Prostate gland (tissue), 2 donors: ENCODE measurements at regions of chr7 and their contacts with region 1.

Region 1: DNA sequence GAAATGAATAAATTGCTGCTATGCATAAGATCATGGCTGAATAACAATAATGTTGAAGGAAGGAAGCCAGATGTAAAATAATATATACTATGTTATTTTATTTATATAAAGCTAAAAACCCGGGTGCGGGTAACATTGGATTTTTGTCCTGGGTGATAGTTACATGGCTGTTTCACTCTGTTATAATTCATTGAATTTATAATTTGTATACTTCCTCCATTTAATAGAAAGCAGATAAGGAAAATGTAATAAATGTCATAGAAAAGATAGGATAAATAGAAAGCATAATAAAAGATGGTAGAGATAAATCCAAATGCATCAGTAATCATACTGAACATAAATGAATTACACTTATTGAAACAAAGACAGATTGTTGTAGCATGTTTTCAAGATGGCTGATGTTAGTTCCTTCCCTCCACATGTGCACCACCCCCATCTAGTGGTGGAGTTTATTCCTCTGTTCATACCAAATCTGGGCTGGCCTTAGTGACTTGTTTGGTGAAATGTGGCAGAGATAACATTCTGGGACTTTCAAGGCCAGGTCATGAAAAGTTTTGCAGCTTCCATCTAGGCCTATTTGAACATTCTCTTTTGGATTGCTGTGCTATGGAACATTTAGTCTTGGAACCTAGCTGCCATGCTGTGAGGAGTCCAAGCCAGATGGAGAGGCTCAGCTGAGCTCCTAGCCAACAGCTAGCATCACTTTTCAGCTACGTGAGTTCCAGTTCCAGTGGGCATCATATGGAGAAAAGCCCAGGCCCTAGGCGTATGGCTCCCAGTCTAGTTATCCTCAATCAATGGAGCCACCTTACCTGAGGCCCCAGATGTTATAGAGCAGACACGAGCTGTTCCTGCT is 46.9 kb downstream of the AHCYL2 start:
- DNase-seq: peak; percentile 56
- H3K4me3 ChIP-seq: no peak overlapping the region
- H3K27ac ChIP-seq: no peak overlapping the region
- H3K4me1 ChIP-seq: no peaks in the 10 kb centered on the region
- H3K27me3 ChIP-seq: no peaks in the 10 kb centered on the region
- CTCF ChIP-seq: peak; percentile 49 to 73 (median 66)
- POLR2A ChIP-seq: no peak

Region 2: GRCh38 chr7:128739048-128739962 is 532.4 kb before region 1 on chr7 and contains the start of gene CALU:
- intact Hi-C with region 1: no loop called
- DNase-seq: peak; percentile 97
- H3K4me3 ChIP-seq: peak within 1 kb of the TSS; percentile 58 to 95
- H3K27ac ChIP-seq: peak within 1 kb of the TSS; percentile 74 to 88
- H3K4me1 ChIP-seq: peaks cover 16% of the 10 kb centered on the region
- H3K27me3 ChIP-seq: no peaks in the 10 kb centered on the region
- CTCF ChIP-seq: peak in 1 of 4 experiments; percentile 24
- POLR2A ChIP-seq: peak; percentile 87
- total RNA-seq, gene CALU: 76.2 to 87.8 TPM

Region 3: GRCh38 chr7:129218514-129219062 is 53.1 kb before region 1 on chr7:
- intact Hi-C with region 1: loop called (anchors 2 kb)
- DNase-seq: peak; percentile 85
- H3K4me3 ChIP-seq: no peak overlapping the region
- H3K27ac ChIP-seq: no peak overlapping the region
- H3K4me1 ChIP-seq: no peaks in the 10 kb centered on the region
- H3K27me3 ChIP-seq: no peaks in the 10 kb centered on the region
- CTCF ChIP-seq: peak; percentile 64 to 95 (median 92)
- POLR2A ChIP-seq: no peak